RWPE1 (cell line): ENCODE measurements at regions of chr11 and their contacts with region 1.

Region 1: DNA sequence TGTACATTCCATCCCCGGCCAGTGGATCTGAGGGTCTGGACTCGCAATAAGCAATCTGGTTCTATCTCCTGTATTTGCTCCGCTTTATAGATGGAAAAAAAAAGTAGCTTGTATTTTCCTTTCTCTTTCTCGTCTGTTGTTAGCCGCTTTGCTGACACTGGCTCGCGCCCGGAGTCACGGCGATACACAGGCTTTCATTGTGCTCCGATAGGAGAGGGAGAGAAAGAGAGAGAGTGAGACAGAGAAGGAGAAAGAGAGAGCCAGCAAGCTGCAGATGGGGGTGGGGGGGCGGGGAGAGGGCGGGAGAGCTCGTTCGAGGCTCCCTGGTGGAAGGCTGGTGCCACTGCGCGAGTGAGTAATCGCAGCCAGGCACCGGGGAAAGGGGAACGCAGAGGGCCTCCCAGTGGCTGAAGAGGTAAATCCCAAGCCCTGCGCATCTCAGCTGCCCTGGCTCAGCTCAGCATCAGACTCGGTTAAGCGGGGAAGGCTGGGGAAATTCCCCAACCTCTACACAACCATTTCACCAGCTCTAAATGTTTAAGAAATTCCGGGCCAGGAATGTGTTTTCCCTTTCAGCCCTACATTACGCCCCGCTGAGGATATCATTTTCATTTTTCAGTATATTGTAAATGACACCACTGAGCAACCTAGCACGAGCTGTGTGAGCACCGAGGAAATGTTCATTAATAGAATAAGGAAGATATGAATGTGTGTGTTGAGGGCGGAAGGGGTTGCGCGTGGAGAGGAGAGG is at the start of gene MAML2:
- DNase-seq: peak; percentile 99
- H3K27ac ChIP-seq: peak within 1 kb of the TSS; percentile 45
- CTCF ChIP-seq: peak; percentile 94

Region 2: GRCh38 chr11:95835768-95836488 is 507.2 kb before region 1 on chr11:
- CTCF ChIA-PET with region 1: interaction called, 17 read pairs
- POLR2A ChIA-PET with region 1: no interaction called
- DNase-seq: peak; percentile 78
- H3K27ac ChIP-seq: no peak overlapping the region
- CTCF ChIP-seq: peak; percentile 88

Region 3: DNA sequence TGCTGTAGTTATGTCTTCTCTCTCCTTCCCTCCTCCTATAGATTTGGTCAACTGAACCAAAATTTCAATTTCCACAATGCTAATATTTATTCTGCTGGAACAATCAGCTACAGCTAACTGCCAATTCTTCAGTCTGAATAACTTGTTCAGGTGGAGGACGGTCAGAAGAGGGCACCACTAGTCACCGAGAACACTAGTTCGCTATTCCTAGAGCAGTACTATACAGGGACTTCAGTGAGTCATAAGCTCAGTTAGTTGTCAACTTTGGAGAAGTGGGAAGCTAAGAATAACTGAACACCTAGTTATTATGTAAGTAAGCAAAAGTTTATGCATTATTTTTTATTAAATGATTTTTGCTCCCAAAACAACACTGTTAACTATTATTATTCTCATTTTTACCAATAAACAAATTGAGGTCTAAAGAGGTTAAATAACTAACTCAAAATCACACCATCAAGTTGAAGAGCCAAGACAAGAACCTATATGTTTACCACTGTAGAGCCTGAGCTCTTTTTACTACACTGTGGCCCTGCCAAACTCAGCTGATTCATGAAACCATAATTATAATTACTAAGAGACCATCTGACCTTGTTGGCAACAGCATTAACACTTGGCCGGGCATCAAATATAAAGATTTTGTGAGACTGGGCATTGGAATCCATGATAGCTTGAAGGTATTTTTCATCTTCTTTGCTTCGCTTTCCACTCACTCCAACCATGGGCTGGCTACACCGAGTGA is 493.9 kb before region 1 on chr11:
- CTCF ChIA-PET with region 1: interaction called, 16 read pairs
- POLR2A ChIA-PET with region 1: no interaction called
- DNase-seq: peak; percentile 43
- H3K27ac ChIP-seq: no peak overlapping the region
- CTCF ChIP-seq: peak; percentile 42; the same call in 1 of the 2 replicates

Region 4: GRCh38 chr11:96054870-96055705 is 288.0 kb before region 1 on chr11:
- CTCF ChIA-PET with region 1: interaction called, 48 read pairs
- POLR2A ChIA-PET with region 1: no interaction called
- DNase-seq: peak; percentile 43
- H3K27ac ChIP-seq: no peak overlapping the region
- CTCF ChIP-seq: peak; percentile 72

Region 5: GRCh38 chr11:96095884-96096303 is 247.2 kb before region 1 on chr11:
- CTCF ChIA-PET with region 1: interaction called, 10 read pairs
- POLR2A ChIA-PET with region 1: no interaction called
- DNase-seq: peak; percentile 53
- H3K27ac ChIP-seq: no peak overlapping the region
- CTCF ChIP-seq: no peak

Region 6: DNA sequence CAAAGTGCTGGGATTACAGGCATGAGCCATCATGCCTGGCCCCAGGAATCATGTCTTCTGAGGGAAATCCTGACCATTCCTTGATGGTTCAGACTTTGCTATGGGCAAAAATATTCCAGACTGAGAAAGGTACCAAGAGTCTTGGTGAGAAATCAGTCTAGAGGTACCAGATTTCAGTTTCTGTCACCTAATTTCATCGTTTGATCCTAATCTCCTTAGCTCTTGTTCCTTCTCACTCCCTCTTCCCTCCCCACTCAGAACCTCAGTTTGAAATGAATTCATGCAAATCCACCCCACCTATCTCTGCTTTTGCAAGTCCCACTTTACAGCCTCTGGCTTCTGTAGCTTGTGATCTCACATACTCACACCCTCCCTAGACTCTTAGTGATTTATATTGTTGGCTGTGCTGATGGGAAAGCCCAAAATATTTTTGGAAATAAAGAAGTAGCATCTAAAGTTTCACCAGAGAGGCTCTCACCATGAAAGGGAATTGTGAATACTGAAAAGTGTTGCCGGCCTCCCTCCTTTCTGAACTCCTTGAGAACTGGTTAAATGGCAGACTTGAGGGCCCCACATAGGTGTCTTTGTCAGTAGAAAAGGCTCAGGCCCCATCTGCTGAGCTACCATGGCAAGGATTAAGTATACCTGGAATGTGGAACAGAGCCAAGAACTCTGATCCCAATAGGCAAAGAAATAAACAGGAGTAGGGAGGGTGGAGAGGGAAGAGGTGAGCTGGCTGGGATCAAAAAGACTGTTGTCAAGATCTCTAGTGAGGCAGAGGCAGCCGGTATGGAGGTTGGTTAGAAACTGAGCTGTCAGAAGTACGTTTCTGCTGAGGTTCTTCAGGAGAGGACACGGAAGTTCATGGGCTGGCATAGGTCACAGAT is 228.7 kb before region 1 on chr11:
- CTCF ChIA-PET with region 1: interaction called, 10 read pairs
- POLR2A ChIA-PET with region 1: interaction called, 3 read pairs
- DNase-seq: no peak
- H3K27ac ChIP-seq: no peak overlapping the region
- CTCF ChIP-seq: no peak

Region 7: DNA sequence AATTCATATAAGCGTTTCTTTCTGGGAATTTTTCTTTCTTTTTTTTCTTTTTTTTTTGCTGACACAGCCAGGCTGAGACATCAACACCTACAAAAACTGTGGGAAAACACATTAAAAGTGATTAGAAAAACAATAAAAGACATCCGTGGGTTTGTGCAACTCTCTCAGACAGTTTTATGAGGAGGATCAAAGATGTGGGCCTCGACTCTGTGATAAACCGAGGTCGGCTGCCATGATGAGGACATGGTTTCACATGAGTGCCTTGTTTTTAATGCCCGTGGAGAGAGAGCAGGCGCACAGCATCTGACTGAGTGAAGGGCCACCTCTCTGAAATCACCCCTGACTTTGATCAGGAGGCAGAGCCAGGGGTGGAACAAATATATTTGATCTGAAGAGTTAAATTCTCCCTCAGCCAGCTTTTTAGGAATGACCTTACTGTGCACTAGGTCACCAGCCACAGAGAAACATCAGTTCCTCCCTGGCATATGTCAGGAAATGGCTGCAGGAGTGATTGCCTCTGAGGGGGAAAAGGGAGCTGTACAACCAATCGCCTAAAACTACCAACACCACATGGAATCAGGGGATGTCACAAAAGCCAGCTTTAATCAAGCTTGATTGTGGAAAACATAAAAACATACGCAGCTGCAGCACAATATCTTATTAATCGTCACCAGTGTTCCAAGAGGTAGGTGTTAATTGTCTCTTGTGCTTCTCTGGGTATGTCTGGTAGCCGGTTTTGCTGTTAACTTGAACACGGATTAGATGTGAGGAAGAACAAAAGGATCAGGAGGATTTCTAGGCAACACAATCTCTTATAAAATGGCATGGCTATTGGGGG is 164.9 kb before region 1 on chr11:
- CTCF ChIA-PET with region 1: no interaction called
- POLR2A ChIA-PET with region 1: no interaction called
- DNase-seq: no peak
- H3K27ac ChIP-seq: no peak overlapping the region
- CTCF ChIP-seq: no peak